ENCODE measurements at regions of chr10 and their contacts with region 1.

Region 1: DNA sequence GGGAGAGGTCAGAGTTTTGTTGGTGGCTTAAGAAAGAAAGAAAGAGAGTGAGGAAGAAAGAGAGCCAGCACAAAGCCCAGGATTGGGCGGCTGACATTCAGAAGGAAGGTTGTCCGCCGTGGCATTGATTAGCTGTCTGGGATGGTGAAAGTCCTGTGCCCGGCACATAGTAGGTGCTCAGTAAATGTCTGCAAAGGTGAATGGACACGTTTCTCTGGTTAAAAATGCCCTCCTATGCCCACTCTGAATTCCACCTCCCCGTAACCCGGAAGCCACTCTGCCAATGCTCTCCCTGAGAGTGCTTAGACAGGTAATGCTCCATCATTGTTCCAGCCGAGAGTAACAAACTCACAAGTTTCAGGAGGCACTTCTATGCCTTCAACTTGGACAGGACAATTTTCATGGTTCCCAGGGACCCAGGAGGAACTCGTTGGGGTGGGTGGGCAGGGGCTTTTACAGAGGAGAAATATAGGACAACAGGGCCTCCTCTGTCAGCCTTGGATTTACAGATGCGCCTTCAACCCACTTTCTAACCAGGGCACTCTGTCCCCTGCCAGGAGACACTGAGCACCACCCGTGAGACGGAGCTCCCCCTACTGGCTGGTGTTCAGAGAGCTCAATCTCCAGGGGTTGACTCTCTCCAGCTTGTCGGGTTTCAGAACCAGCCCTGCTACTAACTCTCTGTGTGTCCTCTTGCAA is 411.5 kb upstream of the ZMIZ1 start:
- DNase-seq: peak; percentile 93
- H3K4me3 Mint-ChIP-seq: no peak overlapping the region
- H3K27ac Mint-ChIP-seq: no peak overlapping the region
- H3K4me1 Mint-ChIP-seq: no peaks in the 10 kb centered on the region
- H3K27me3 Mint-ChIP-seq: peaks cover 14% of the 10 kb centered on the region
- CTCF ChIP-seq: peak; percentile 86

Region 2: GRCh38 chr10:78424719-78425118 is 232.6 kb before region 1 on chr10:
- CTCF ChIA-PET with region 1: interaction called, 3 read pairs
- intact Hi-C with region 1: loop called (anchors 10 kb)
- DNase-seq: peak; percentile 41
- H3K4me3 Mint-ChIP-seq: no peak overlapping the region
- H3K27ac Mint-ChIP-seq: no peak overlapping the region
- H3K4me1 Mint-ChIP-seq: no peaks in the 10 kb centered on the region
- H3K27me3 Mint-ChIP-seq: peaks cover 97% of the 10 kb centered on the region
- CTCF ChIP-seq: peak; percentile 35

Region 3: DNA sequence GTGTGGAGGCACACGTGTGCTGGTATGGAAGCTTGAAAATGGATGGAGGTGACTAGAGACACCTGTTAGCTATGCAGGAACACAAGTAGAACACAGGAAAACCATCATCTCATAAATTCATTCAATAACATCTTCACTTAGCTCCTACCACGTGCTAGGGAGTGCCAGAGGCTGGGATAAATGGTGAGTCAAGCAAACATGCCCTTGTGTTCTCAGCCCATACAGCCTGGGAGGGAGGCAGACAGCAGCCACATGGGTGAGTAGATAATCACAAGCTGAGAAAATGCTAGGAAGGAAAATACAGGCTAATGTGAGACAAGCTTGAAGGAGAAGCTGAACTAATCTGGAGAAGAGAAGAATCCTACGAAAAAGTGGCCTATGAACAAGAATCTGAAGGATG is 56.6 kb before region 1 on chr10:
- CTCF ChIA-PET with region 1: interaction called, 15 read pairs
- intact Hi-C with region 1: loop called (anchors 2 kb)
- DNase-seq: no peak
- H3K4me3 Mint-ChIP-seq: no peak overlapping the region
- H3K27ac Mint-ChIP-seq: no peak overlapping the region
- H3K4me1 Mint-ChIP-seq: no peaks in the 10 kb centered on the region
- H3K27me3 Mint-ChIP-seq: peaks cover 85% of the 10 kb centered on the region
- CTCF ChIP-seq: no peak

Region 4: GRCh38 chr10:78641693-78642092 is 15.6 kb before region 1 on chr10:
- CTCF ChIA-PET with region 1: no interaction called
- intact Hi-C with region 1: no loop called
- DNase-seq: no peak
- H3K4me3 Mint-ChIP-seq: no peak overlapping the region
- H3K27ac Mint-ChIP-seq: no peak overlapping the region
- H3K4me1 Mint-ChIP-seq: peaks cover 8% of the 10 kb centered on the region
- H3K27me3 Mint-ChIP-seq: peaks cover 27% of the 10 kb centered on the region
- CTCF ChIP-seq: no peak

Region 5: DNA sequence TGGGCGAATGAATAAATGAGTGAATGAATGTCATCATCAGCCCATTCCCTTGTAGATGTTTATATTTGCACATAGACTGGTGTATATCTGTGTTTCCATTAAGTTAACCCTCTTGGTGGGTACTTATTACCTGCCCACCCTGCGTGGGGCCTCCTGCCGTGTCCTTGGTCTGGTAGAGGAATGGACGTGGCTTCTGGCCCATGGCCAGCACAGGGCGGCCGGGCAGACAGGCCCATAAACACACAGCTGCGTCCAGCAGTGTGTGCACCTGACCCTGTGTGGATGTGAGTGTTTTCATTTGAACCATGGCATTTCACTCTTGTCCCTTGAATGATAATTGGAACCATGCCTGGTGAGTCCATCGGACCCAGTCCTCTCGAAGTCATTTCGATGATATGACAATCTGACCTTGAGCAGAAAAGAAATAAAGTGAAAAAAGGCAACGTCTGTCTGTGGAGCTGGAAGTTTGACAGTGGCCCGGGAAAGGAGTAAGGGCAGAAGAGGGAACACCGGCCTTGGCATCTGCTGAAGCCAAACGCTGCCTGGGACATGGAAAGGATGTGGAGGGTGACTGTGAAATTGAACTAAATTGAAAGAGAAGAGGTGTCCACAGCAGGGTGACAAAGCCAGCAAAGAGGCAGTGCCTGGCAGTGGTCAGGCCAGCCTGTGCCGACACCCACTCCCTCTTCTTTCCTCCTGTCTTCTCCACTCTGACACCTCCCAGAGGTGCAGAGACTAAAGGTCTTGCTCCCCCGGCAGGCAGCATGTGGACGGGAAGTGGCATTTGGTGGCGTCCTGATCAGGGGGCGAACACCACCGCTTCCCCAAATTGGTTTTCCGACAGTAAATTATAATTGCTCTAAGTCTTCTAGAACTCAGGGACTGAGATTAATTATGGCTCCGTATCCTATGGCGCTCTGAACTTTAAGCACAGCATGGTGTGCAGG is 212.5 kb after region 1 on chr10:
- CTCF ChIA-PET with region 1: no interaction called
- intact Hi-C with region 1: no loop called
- DNase-seq: no peak
- H3K4me3 Mint-ChIP-seq: no peak overlapping the region
- H3K27ac Mint-ChIP-seq: no peak overlapping the region
- H3K4me1 Mint-ChIP-seq: peaks cover 6% of the 10 kb centered on the region
- H3K27me3 Mint-ChIP-seq: no peaks in the 10 kb centered on the region
- CTCF ChIP-seq: no peak